Activated naive CD4-positive, alpha-beta T cell treated with anti-CD3 and anti-CD28 coated beads for 36 hours (primary cell): ENCODE measurements at regions of chr4 and their contacts with region 1.

Region 1: GRCh38 chr4:157978680-157979361 is 194.0 kb downstream of the GASK1B start:
- DNase-seq: peak; percentile 11
- H3K4me3 Mint-ChIP-seq: no peak overlapping the region
- H3K27ac Mint-ChIP-seq: no peak overlapping the region
- H3K4me1 Mint-ChIP-seq: peaks cover 3% of the 10 kb centered on the region
- H3K27me3 Mint-ChIP-seq: peaks cover 4% of the 10 kb centered on the region

Region 2: DNA sequence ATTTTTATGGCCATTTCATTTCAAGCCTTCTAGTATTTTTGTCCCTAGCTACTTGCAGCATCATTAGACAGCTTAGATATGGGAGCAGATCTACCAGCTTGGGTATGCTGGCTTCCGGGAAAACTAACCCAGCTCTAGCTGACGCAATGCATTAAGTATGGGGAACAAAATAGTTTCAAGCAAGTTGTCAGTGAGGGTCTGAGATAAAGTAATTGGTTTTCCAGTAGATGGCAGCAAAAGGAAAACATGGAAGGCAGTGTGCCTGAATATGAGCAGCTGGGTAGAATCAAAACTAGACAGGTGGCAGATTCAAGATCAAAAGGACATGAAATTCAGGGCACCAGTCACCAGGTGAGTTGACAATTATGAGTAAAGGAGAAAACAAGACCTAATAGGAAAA is 1684.2 kb before region 1 on chr4:
- CTCF ChIA-PET with region 1: no interaction called
- intact Hi-C with region 1: loop called (anchors 10 kb)
- DNase-seq: no peak
- H3K4me3 Mint-ChIP-seq: no peak overlapping the region
- H3K27ac Mint-ChIP-seq: no peak overlapping the region
- H3K4me1 Mint-ChIP-seq: no peaks in the 10 kb centered on the region
- H3K27me3 Mint-ChIP-seq: no peaks in the 10 kb centered on the region

Region 3: DNA sequence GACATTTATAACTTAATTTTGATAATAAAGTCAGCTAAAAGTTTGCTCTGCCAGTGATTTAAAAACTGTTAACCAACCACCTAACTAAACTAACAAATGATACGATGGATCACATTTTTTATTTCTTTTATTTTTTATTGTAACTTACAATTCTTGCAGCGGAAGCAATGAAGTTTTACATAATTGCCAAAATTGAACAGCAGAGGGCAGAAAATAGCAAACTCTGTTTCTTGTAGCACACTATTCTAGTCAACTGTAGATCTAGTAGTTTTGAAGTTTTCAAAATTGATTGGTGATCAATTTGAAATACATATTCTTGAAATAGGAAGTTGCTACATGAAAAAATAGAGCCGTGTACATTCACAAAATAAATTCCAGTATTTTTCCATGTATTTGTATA is 761.1 kb before region 1 on chr4:
- CTCF ChIA-PET with region 1: no interaction called
- intact Hi-C with region 1: loop called (anchors 1 kb)
- DNase-seq: no peak
- H3K4me3 Mint-ChIP-seq: no peak overlapping the region
- H3K27ac Mint-ChIP-seq: no peak overlapping the region
- H3K4me1 Mint-ChIP-seq: peaks cover 4% of the 10 kb centered on the region
- H3K27me3 Mint-ChIP-seq: peaks cover 33% of the 10 kb centered on the region

Region 4: GRCh38 chr4:158155656-158156356 is 177.0 kb after region 1 on chr4:
- CTCF ChIA-PET with region 1: no interaction called
- intact Hi-C with region 1: no loop called
- DNase-seq: no peak
- H3K4me3 Mint-ChIP-seq: no peak overlapping the region
- H3K27ac Mint-ChIP-seq: no peak overlapping the region
- H3K4me1 Mint-ChIP-seq: no peaks in the 10 kb centered on the region
- H3K27me3 Mint-ChIP-seq: peaks cover 3% of the 10 kb centered on the region